ENCODE measurements at regions of chr13 and their contacts with region 1.

Region 1: DNA sequence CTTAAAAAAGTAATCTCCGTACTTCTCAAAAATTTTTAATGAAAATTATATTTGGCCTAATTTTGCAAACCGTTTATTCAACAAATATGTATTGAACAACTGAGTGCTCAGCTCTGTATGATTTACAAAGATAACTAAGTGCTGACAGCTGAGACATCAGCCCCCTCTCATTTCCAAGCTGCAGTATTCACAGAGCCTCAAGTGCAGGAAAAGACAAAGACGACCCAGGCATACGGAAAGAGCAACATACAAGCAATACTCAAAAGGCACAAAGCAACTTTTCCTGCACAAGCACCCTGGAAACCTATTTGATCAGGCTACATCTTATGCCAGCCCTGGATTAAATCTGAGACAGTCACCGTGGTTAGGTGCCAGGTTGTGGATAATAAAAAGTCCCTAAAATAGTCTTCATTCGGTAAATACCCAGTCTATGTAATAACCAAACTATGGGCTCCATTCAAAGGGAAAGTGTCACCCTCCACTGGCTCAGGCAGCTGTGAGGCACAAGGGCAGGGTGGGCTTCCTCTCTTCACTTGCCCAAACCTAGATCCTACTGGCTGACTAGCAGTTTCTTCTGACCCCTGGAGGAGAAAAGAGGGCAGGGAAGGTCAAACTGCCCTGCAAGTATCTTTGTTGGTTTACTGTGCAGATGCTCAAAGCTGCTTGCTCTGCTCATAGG is 65.5 kb downstream of the TBC1D4 start:
- DNase-seq: peak; percentile 80
- H3K4me3 ChIP-seq: peak overlapping the region; percentile 29
- H3K27ac ChIP-seq: peak overlapping the region; percentile 77
- H3K4me1 ChIP-seq: peaks cover 99% of the 10 kb centered on the region
- CTCF ChIP-seq: peak; percentile 69

Region 2: GRCh38 chr13:75372517-75372916 is 43.9 kb before region 1 on chr13:
- CTCF ChIA-PET with region 1: interaction called, 4 read pairs
- POLR2A ChIA-PET with region 1: interaction called, 4 read pairs
- intact Hi-C with region 1: loop called (anchors 2 kb)
- DNase-seq: peak; percentile 74
- H3K4me3 ChIP-seq: no peak overlapping the region
- H3K27ac ChIP-seq: no peak overlapping the region
- H3K4me1 ChIP-seq: peaks cover 47% of the 10 kb centered on the region
- CTCF ChIP-seq: peak; percentile 85

Region 3: DNA sequence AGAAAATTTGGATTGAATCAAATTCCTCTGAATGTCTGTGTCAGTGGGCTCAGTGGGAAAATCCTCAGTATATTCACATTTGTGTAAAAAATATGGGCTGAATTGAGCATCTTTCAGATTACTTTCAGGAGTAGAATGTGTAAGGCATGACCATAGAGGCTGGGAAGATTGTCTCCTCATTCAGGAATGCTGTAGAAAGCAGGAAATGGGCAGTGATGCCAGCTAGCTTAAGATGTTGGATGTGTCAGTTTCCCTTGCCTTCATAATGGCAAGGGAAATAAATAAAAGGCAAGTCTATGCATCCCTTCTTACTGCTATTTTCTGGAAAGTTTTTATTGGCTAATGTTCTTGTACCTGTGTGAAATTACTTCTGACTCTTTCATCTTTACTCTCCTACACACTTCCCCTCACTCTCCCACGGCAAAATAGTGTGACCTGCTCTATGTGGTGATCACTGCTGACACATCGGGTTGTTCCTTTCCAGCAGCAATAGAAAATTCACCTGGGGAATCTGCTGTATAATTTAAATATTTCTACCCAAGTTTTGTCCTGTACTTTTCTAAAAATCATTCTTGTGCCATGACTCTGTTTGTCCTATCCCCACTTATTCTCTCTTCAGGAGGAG is 322.9 kb after region 1 on chr13:
- CTCF ChIA-PET with region 1: no interaction called
- POLR2A ChIA-PET with region 1: no interaction called
- intact Hi-C with region 1: no loop called
- DNase-seq: no peak
- H3K4me3 ChIP-seq: no peak overlapping the region
- H3K27ac ChIP-seq: no peak overlapping the region
- H3K4me1 ChIP-seq: no peaks in the 10 kb centered on the region
- CTCF ChIP-seq: no peak

Measured in OCI-LY7 (cell line).